Transverse colon (tissue), 4 donors: ENCODE measurements at regions of chr1 and their contacts with region 1.

Region 1: DNA sequence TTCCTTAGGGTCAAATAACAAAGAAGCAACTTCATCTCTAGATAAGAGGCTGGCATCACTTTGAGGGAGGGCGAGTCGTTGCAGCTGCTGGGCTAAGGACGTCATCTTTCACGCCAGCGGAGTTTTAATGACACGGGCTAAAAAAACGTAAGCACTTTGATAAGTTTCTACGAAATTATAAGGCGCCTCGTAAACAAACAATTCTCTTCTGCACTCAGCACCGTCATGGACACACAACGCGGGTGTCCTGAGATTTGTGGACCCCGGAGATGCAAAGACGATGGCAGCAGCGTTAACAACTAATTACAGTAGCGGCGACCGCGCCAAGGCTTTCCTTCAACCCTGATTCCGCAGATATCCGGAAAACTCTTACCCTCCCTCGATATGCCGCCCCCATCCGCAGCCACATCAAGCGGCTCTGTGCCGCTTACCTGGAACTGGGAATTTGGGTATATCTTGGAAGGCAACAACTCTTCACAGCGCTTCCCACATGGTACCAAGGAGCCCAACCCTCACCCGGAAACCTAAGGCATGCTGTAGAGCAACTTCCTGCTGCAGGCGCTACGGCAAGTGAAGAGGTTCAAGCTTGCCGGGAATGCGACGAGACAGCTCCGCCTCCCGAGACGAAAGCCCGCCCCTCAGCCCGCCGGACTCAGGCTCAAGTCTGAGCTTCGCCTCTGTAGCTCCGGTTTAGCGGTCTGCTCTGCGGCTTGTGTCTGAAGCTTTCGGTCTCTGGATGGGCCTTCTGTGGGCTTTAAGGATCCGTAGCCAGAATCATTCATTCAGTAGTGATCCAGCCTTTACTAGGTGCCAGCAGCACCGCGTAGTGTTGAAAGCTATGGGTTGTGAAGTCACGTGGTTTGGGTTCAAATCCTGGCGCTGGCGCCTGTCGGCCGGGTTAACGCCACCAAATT is at the start of gene HEATR1:
- DNase-seq: peak; percentile 94
- H3K4me3 ChIP-seq: peak within 1 kb of the TSS; percentile 60 to 96 (median 82)
- H3K27ac ChIP-seq: peak within 1 kb of the TSS; percentile 75 to 90 (median 82)
- H3K4me1 ChIP-seq: peaks cover 0 to 12% (median 9%) of the 10 kb centered on the region in 4 donors
- H3K27me3 ChIP-seq: peaks cover 15% of the 10 kb centered on the region
- CTCF ChIP-seq: no peak
- EP300 ChIP-seq: no peak
- POLR2A ChIP-seq: peak; percentile 43
- total RNA-seq, gene HEATR1: 9.4 to 15.7 (median 13.2) TPM

Region 2: GRCh38 chr1:236795035-236795756 is 190.9 kb after region 1 on chr1 and contains the start of gene MTR:
- in situ Hi-C with region 1: loop called in 1 of 4 experiments (anchors 10 kb)
- intact Hi-C with region 1: no loop called
- DNase-seq: peak; percentile 98
- H3K4me3 ChIP-seq: peak within 1 kb of the TSS; percentile 60 to 86 (median 66)
- H3K27ac ChIP-seq: peak within 1 kb of the TSS; percentile 85 to 94 (median 90)
- H3K4me1 ChIP-seq: peaks cover 6 to 24% (median 22%) of the 10 kb centered on the region in 4 donors
- H3K27me3 ChIP-seq: no peaks in the 10 kb centered on the region
- CTCF ChIP-seq: no peak
- EP300 ChIP-seq: no peak
- POLR2A ChIP-seq: peak; percentile 89
- total RNA-seq, gene MTR: 10.1 to 18.4 (median 12.6) TPM

Region 3: GRCh38 chr1:237562242-237562823 is 958.1 kb after region 1 on chr1:
- in situ Hi-C with region 1: loop called in 2 of 4 experiments (anchors 25 kb)
- intact Hi-C with region 1: no loop called
- DNase-seq: no peak
- H3K4me3 ChIP-seq: no peak overlapping the region
- H3K27ac ChIP-seq: no peak overlapping the region
- H3K4me1 ChIP-seq: no peaks in the 10 kb centered on the region
- H3K27me3 ChIP-seq: no peaks in the 10 kb centered on the region
- CTCF ChIP-seq: peak; percentile 46 to 66 (median 51)
- EP300 ChIP-seq: no peak
- POLR2A ChIP-seq: no peak

Region 4: DNA sequence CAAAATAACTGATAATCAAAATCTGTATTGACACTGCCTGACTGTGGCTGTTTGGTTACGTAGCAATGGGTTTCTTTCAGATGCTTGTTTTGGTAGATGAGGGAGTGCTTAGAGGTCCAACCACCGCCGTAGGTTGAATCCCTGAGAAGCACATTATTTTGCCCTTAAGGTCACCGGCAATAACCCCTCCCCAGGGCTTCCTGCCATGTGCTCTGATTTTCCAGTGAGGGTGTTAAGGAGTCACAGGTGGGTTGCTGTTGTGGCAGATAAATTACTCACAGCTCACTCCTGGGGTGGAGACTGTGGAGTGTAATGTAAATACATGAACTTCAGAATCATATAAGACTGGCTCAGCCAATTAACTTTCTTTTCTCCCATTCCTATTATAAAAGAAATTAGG is 1367.9 kb after region 1 on chr1:
- in situ Hi-C with region 1: no loop called
- intact Hi-C with region 1: loop called (anchors 5 kb)
- DNase-seq: no peak
- H3K4me3 ChIP-seq: no peak overlapping the region
- H3K27ac ChIP-seq: no peak overlapping the region
- H3K4me1 ChIP-seq: no peaks in the 10 kb centered on the region
- H3K27me3 ChIP-seq: no peaks in the 10 kb centered on the region
- CTCF ChIP-seq: no peak
- EP300 ChIP-seq: no peak
- POLR2A ChIP-seq: no peak